ENCODE measurements at regions of chr5 and their contacts with region 1.

Region 1: GRCh38 chr5:141573489-141574121 is 45.2 kb downstream of the DIAPH1 start:
- DNase-seq: no peak
- ATAC-seq: no peak
- H3K4me3 Mint-ChIP-seq: no peak overlapping the region
- H3K27ac Mint-ChIP-seq: no peak overlapping the region
- H3K4me1 Mint-ChIP-seq: peaks cover 13% of the 10 kb centered on the region
- H3K27me3 Mint-ChIP-seq: no peaks in the 10 kb centered on the region
- CTCF ChIP-seq: no peak

Region 2: DNA sequence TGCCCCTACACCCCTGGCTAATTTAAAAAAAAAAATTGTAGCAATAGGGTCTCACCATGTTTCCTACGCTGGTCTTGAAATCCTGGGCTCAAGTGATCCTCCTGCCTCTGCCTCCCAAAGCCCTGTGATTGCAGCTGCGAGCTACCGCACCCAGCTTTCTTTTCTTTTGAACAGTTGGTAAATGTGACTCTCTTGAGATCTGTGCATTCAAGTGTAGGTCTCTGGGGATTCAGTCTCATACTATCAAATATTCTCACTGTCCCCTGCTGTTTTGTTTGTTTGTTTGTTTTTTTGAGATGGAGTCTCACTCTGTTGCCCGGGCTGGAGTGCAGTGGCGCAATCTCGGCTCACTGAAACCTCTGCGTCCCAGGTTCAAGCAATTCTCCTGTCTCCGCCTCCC is 1967.7 kb before region 1 on chr5:
- CTCF ChIA-PET with region 1: no interaction called
- POLR2A ChIA-PET with region 1: interaction called, 15 read pairs
- intact Hi-C with region 1: no loop called
- DNase-seq: no peak
- ATAC-seq: peak; percentile 86
- H3K4me3 Mint-ChIP-seq: peak overlapping the region; percentile 60
- H3K27ac Mint-ChIP-seq: peak overlapping the region; percentile 47
- H3K4me1 Mint-ChIP-seq: peaks cover 41% of the 10 kb centered on the region
- H3K27me3 Mint-ChIP-seq: no peaks in the 10 kb centered on the region
- CTCF ChIP-seq: no peak

Measured in activated B cell treated with CpG ODN at 0.5 μM for 24 hours (primary cell).